B cell (primary cell): ENCODE measurements at regions of chr19 and their contacts with region 1.

Region 1: DNA sequence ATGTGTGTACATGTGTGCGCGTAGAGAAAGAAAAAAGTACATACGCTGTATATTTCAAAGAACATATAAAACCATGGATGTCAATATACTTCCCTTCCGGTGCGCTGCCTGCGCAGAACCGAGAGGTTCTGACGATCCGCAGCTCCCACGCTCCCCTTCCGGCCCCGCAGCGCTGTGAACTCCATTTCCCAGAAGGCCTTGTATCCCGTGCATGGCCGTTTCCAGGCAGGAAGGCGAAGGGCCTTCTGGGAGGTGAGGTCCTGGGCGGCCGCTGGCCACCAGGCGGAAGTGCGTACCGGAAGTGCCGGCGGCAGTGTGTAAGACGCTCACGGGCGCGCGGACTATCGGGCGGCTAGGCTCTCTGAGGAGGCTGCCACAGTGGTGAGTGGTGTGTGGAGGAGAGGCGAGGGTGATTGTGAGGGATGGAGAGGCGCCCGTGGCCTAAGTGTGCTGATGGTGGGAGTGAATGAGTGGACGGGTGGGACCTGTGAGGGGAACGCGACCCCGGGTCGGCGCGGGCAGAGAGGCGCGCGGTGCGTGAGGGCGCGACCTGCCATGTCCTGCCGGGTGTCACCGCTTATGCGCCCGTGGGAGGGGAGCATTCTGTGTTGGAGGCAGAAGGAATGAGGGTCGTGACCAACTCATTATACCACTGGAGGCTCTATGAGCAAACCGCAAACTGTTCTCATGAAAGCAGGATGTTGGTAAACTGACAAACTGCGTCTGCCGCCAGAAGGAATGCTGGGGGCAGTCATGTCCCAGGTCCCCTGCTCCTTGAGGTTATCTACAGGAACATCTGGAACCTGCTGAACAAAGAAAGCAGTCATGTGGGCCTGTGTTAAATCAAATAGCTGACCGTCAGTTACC is at the start of gene ERVK3-1:
- DNase-seq: peak; percentile 98
- ATAC-seq: peak; percentile 98
- H3K4me3 ChIP-seq: peak within 1 kb of the TSS; percentile 39 to 94 (median 88)
- H3K4me3 Mint-ChIP-seq: peak within 1 kb of the TSS; percentile 97
- H3K27ac ChIP-seq: peak within 1 kb of the TSS; percentile 85 to 93
- H3K27ac Mint-ChIP-seq: peak within 1 kb of the TSS; percentile 97
- H3K4me1 ChIP-seq: peaks cover 15 to 18% of the 10 kb centered on the region in 2 donors
- H3K4me1 Mint-ChIP-seq: peaks cover 36% of the 10 kb centered on the region
- H3K27me3 ChIP-seq: no peaks in the 10 kb centered on the region
- H3K27me3 Mint-ChIP-seq: no peaks in the 10 kb centered on the region
- CTCF ChIP-seq: no peak
- total RNA-seq, gene ERVK3-1: 79.0 and 80.2 TPM in 2 replicates

Region 2: DNA sequence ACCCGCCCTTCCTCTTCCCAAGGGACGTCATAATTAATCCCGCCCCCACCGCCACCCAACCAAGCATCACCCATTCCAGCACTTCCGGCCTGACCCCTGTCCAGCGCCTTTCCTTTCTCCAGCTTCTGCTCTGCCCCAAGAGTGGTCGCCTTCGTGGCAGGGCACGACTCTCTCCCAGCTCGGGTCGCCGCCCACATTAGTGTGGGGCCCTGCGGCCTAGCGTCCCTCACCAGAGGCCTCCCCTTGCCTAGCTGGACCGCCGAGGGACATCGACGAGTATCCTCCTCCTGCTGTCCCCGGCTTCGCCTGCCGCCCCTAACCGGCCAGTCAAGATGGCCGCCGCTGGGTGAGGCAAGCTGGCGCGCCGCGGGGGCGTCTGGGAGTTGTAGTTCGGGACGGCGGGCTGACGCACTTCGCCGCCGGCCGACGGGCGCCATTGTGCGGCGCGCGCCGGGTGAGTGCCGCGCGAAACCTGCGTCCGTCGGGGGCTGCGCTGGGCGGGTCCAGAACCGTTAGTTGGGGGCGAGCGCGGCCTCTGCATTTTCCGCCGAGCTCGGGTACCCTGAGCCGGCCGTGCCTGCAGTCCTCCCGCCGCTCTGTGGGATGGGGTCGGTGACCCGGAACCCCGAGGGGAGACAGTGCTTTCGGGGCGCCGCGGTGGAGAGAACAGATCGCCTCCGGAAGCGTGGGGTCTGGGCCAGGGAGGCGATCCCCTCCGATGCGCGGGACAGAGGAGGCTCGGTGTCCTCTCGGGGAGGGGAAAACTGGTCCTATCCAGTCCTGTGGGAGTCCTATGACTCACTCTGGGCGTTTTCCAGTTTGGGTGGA is 122.1 kb before region 1 on chr19 and contains the start of gene ZNF274:
- CTCF ChIA-PET with region 1: interaction called, 3 read pairs
- POLR2A ChIA-PET with region 1: no interaction called
- intact Hi-C with region 1: loop called (anchors 1 kb)
- DNase-seq: peak; percentile 97
- ATAC-seq: peak; percentile 85
- H3K4me3 ChIP-seq: peak within 1 kb of the TSS; percentile 78 to 100 (median 88)
- H3K4me3 Mint-ChIP-seq: peak within 1 kb of the TSS; percentile 96
- H3K27ac ChIP-seq: peak within 1 kb of the TSS; percentile 99 to 100
- H3K27ac Mint-ChIP-seq: peak within 1 kb of the TSS; percentile 100
- H3K4me1 ChIP-seq: peaks cover 12 to 20% of the 10 kb centered on the region in 2 donors
- H3K4me1 Mint-ChIP-seq: peaks cover 26% of the 10 kb centered on the region
- H3K27me3 ChIP-seq: no peaks in the 10 kb centered on the region
- H3K27me3 Mint-ChIP-seq: no peaks in the 10 kb centered on the region
- CTCF ChIP-seq: no peak
- total RNA-seq, gene ZNF274: 83.7 and 85.4 TPM in 2 replicates

Region 3: GRCh38 chr19:58326914-58327726 is 21.8 kb after region 1 on chr19 and contains the start of gene ZSCAN22:
- CTCF ChIA-PET with region 1: interaction called, 4 read pairs
- POLR2A ChIA-PET with region 1: interaction called, 6 read pairs
- intact Hi-C with region 1: loop called (anchors 1 kb)
- DNase-seq: peak; percentile 90
- ATAC-seq: peak; percentile 92
- H3K4me3 ChIP-seq: peak within 1 kb of the TSS; percentile 72 to 98 (median 83)
- H3K4me3 Mint-ChIP-seq: no peak within 1 kb of the TSS
- H3K27ac ChIP-seq: peak within 1 kb of the TSS; percentile 71 to 82
- H3K27ac Mint-ChIP-seq: no peak within 1 kb of the TSS
- H3K4me1 ChIP-seq: peaks cover 11 to 23% of the 10 kb centered on the region in 2 donors
- H3K4me1 Mint-ChIP-seq: no peaks in the 10 kb centered on the region
- H3K27me3 ChIP-seq: no peaks in the 10 kb centered on the region
- H3K27me3 Mint-ChIP-seq: no peaks in the 10 kb centered on the region
- CTCF ChIP-seq: no peak
- total RNA-seq, gene ZSCAN22: 7.1 TPM in 2 replicates

Region 4: DNA sequence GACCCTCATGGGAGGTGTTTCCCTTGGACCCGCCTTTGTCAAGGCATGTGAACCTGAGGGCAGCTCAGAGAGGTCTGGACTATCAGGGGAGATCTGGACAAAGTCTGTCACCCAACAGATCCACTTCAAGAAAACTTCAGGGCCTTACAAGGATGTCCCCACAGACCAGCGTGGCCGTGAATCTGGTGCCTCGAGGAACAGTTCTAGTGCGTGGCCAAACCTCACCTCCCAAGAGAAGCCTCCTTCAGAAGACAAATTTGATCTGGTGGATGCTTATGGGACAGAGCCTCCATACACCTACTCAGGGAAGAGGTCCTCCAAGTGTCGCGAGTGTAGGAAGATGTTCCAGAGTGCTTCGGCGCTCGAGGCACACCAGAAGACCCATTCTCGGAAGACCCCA is 33.0 kb after region 1 on chr19:
- CTCF ChIA-PET with region 1: no interaction called
- POLR2A ChIA-PET with region 1: no interaction called
- intact Hi-C with region 1: no loop called
- DNase-seq: no peak
- ATAC-seq: no peak
- H3K4me3 ChIP-seq: no peak overlapping the region
- H3K4me3 Mint-ChIP-seq: no peak overlapping the region
- H3K27ac ChIP-seq: no peak overlapping the region
- H3K27ac Mint-ChIP-seq: no peak overlapping the region
- H3K4me1 ChIP-seq: no peaks in the 10 kb centered on the region
- H3K4me1 Mint-ChIP-seq: no peaks in the 10 kb centered on the region
- H3K27me3 ChIP-seq: no peaks in the 10 kb centered on the region
- H3K27me3 Mint-ChIP-seq: no peaks in the 10 kb centered on the region
- CTCF ChIP-seq: no peak

Region 5: DNA sequence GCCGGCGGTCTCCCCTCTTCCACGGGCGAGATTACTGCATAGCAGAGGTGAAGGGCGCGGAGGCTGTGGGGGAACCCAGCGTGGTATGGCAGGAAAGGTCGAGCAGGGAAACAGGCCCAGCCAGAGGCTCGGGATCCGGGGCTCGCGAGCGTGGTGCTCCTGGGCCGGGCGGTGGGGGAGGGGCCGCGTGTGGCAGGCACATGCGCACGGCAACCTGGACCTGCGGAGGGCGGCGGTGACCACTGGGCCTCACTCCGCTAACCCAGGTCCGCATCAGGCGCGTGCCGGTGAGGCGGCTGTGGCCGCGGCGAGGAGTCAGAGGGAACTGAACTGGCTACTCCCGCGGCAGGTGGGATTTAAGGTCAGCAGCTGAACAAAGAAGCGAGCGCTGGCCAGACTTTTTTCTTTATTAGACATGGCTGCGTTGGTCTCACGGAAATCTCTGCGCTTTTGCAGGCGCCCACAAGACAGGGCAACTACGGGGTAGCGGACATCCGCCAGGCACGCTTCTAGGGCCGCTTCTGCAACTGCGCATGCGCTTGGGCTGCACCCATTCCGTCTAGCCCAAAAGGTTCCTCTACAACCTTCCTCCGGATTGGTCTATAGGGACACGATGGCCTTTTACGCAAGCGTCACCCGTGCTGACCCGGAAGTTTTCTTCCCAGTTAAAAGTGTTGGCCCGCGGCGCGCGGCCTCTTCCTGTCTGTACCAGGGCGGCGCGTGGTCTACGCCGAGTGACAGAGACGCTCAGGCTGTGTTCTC is 81.5 kb after region 1 on chr19 and contains the start of gene RPS5:
- CTCF ChIA-PET with region 1: no interaction called
- POLR2A ChIA-PET with region 1: interaction called, 9 read pairs
- intact Hi-C with region 1: loop called (anchors 1 kb)
- DNase-seq: peak; percentile 98
- ATAC-seq: peak; percentile 90
- H3K4me3 ChIP-seq: peak within 1 kb of the TSS; percentile 71 to 87 (median 76)
- H3K4me3 Mint-ChIP-seq: peak within 1 kb of the TSS; percentile 97
- H3K27ac ChIP-seq: peak within 1 kb of the TSS; percentile 94 to 95
- H3K27ac Mint-ChIP-seq: peak within 1 kb of the TSS; percentile 99
- H3K4me1 ChIP-seq: peaks cover 27 to 33% of the 10 kb centered on the region in 2 donors
- H3K4me1 Mint-ChIP-seq: peaks cover 44% of the 10 kb centered on the region
- H3K27me3 ChIP-seq: no peaks in the 10 kb centered on the region
- H3K27me3 Mint-ChIP-seq: no peaks in the 10 kb centered on the region
- CTCF ChIP-seq: no peak
- total RNA-seq, gene RPS5: 1,234 and 1,311 TPM in 2 replicates

Region 6: GRCh38 chr19:58439576-58440554 is 134.6 kb after region 1 on chr19 and contains the start of gene ZNF132:
- CTCF ChIA-PET with region 1: no interaction called
- POLR2A ChIA-PET with region 1: interaction called, 4 read pairs
- intact Hi-C with region 1: loop called (anchors 2 kb)
- DNase-seq: peak; percentile 99
- ATAC-seq: peak; percentile 98
- H3K4me3 ChIP-seq: peak within 1 kb of the TSS; percentile 60 to 97 (median 74)
- H3K4me3 Mint-ChIP-seq: peak within 1 kb of the TSS; percentile 99
- H3K27ac ChIP-seq: peak within 1 kb of the TSS; percentile 78 to 97
- H3K27ac Mint-ChIP-seq: peak within 1 kb of the TSS; percentile 98
- H3K4me1 ChIP-seq: peaks cover 14 to 21% of the 10 kb centered on the region in 2 donors
- H3K4me1 Mint-ChIP-seq: peaks cover 23% of the 10 kb centered on the region
- H3K27me3 ChIP-seq: no peaks in the 10 kb centered on the region
- H3K27me3 Mint-ChIP-seq: peaks cover 9% of the 10 kb centered on the region
- CTCF ChIP-seq: no peak
- total RNA-seq, gene ZNF132: 14.7 and 15.2 TPM in 2 replicates

Region 7: GRCh38 chr19:58475714-58476497 is 170.6 kb after region 1 on chr19 and contains the start of gene ZNF446:
- CTCF ChIA-PET with region 1: no interaction called
- POLR2A ChIA-PET with region 1: no interaction called
- intact Hi-C with region 1: loop called (anchors 1 kb)
- DNase-seq: peak; percentile 97
- ATAC-seq: peak; percentile 89
- H3K4me3 ChIP-seq: peak within 1 kb of the TSS; percentile 39 to 85 (median 70)
- H3K4me3 Mint-ChIP-seq: peak within 1 kb of the TSS; percentile 98
- H3K27ac ChIP-seq: peak within 1 kb of the TSS; percentile 82 to 89
- H3K27ac Mint-ChIP-seq: peak within 1 kb of the TSS; percentile 98
- H3K4me1 ChIP-seq: peaks cover 14 to 18% of the 10 kb centered on the region in 2 donors
- H3K4me1 Mint-ChIP-seq: peaks cover 20% of the 10 kb centered on the region
- H3K27me3 ChIP-seq: no peaks in the 10 kb centered on the region
- H3K27me3 Mint-ChIP-seq: no peaks in the 10 kb centered on the region
- CTCF ChIP-seq: no peak
- total RNA-seq, gene ZNF446: 15.0 and 18.5 TPM in 2 replicates